ENCODE measurements at regions of chr14 and their contacts with region 1.

Region 1: DNA sequence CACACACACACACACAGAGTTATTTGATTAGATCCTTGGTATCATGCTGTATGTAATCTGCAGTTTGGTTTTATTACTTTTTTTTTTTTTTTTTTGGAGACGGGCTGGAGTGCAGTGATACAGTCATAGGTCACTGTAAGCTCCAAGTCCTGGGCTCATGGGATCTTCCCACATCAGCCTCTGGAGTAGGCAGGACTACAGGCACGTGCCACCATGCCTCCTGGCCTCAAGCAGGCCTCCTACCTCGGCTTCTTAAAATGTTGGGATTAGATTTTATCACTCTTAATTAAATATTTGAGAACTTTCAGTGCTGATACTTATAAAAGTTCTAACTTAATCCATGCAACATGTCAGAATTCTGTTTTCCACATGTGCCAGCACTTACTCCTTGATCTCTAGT is 31.3 kb upstream of the PSEN1 start:
- DNase-seq: no peak

Region 2: GRCh38 chr14:72962829-72963312 is 142.2 kb before region 1 on chr14:
- intact Hi-C with region 1: no loop called
- DNase-seq: no peak

Region 3: GRCh38 chr14:73125169-73125588 is 20.1 kb after region 1 on chr14:
- intact Hi-C with region 1: loop called in 1 of 2 experiments (anchors 1 kb)
- DNase-seq: no peak

Measured in posterior vena cava (tissue), 2 donors.